Activated CD8-positive, alpha-beta T cell treated with anti-CD3 and anti-CD28 coated beads, Interleukin-2, amount 10 ng/mL, durations not matched to agents 7 days and 5 days (primary cell): ENCODE measurements at regions of chr2 and their contacts with region 1.

Region 1: DNA sequence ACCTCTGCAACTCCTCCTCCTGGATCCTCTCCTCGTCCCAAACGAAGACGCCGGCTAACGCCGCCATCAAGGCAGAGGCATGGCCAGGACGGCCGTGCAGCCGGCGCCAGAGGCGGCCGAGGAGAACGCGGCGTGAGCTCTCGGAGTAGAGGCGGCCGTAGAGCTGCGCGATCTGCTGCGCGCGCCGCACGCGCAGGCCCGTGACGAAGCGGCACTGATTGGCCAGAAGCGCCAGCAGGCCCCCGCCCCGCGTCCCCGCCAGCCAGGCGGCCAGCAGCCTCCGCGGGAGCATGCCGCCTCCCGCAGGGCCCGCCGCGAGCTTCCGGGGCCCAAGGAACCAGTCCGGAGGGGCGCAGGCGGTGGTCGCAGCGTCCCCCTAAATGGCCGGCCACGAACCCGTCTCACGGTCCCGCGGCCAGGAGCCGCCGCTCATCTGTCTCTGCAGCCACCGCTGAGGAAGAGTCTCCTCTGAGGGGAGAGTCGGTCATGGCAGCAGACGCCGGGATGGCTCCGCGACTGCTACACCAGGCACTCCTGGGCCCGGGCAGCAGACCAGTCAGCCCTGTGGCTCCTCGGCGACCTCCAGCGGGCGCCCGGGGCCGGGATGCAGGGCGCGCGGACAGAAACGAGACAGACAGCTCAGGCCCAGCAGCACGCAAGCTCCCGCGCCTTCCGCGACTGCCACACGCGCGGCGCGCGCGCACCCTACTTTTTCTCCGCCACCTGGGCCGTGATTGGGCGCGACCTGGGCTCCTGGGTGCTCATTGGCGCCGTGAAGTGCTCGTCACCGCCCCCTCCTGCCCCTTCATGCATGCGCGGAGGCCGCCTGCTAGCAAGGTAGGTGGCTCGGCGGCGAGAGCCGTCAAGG is at the start of gene STARD7:
- DNase-seq: peak; percentile 98
- ATAC-seq: peak; percentile 92
- H3K4me3 Mint-ChIP-seq: peak within 1 kb of the TSS; percentile 87
- H3K27ac Mint-ChIP-seq: peak within 1 kb of the TSS; percentile 86
- H3K4me1 Mint-ChIP-seq: peaks cover 55% of the 10 kb centered on the region
- H3K27me3 Mint-ChIP-seq: no peaks in the 10 kb centered on the region
- total RNA-seq, gene STARD7: 139 to 143 TPM

Region 2: DNA sequence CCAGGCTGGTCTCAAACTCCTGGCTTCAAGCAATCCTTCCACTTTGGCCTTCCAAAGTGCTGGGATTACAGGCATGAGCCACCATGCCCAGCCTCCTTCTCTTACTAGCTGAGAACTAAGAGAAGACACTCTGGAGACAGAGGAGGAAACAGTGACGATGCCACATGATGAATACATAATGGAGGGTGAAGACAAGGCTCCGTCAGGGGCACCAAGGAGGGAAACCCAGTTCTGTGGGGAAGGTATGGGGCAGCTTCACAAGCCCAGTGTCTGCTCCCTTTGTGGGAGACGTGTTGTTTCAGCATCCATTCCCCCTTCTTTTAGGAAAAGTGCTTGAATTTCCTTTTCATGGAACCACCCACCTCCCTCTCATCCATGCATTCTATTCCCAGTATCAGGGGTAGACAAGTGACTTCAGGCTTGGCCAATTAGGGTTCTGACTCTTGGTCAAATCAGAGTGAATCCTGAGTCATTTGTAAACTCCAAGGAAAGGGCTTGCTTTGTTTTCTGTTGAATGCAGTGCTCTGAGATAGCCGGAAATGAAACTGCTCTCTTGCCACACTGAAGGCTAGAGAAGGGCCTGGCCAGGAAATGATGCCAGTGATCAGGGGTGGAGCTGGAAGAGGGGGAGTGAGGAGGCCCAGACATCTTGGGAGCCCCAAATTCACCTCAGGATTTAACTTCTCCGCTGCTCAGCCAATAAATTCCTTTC is 33.7 kb after region 1 on chr2:
- CTCF ChIA-PET with region 1: interaction called, 5 read pairs
- POLR2A ChIA-PET with region 1: interaction called, 12 read pairs
- DNase-seq: peak; percentile 80
- ATAC-seq: peak; percentile 92
- H3K4me3 Mint-ChIP-seq: peak overlapping the region; percentile 58
- H3K27ac Mint-ChIP-seq: peak overlapping the region; percentile 96
- H3K4me1 Mint-ChIP-seq: peaks cover 57% of the 10 kb centered on the region
- H3K27me3 Mint-ChIP-seq: no peaks in the 10 kb centered on the region

Region 3: GRCh38 chr2:96254571-96254970 is 46.2 kb after region 1 on chr2:
- CTCF ChIA-PET with region 1: no interaction called
- POLR2A ChIA-PET with region 1: interaction called, 10 read pairs
- DNase-seq: no peak
- ATAC-seq: no peak
- H3K4me3 Mint-ChIP-seq: no peak overlapping the region
- H3K27ac Mint-ChIP-seq: no peak overlapping the region
- H3K4me1 Mint-ChIP-seq: peaks cover 65% of the 10 kb centered on the region
- H3K27me3 Mint-ChIP-seq: no peaks in the 10 kb centered on the region

Region 4: GRCh38 chr2:96260404-96261260 is 52.3 kb after region 1 on chr2:
- CTCF ChIA-PET with region 1: interaction called, 34 read pairs
- POLR2A ChIA-PET with region 1: interaction called, 10 read pairs
- DNase-seq: peak; percentile 57
- ATAC-seq: peak; percentile 43
- H3K4me3 Mint-ChIP-seq: no peak overlapping the region
- H3K27ac Mint-ChIP-seq: peak overlapping the region; percentile 53
- H3K4me1 Mint-ChIP-seq: peaks cover 72% of the 10 kb centered on the region
- H3K27me3 Mint-ChIP-seq: no peaks in the 10 kb centered on the region

Region 5: GRCh38 chr2:96265840-96266679 is 57.7 kb after region 1 on chr2 and contains the starts of genes CIAO1 and TMEM127:
- CTCF ChIA-PET with region 1: interaction called, 34 read pairs
- POLR2A ChIA-PET with region 1: interaction called, 17 read pairs
- DNase-seq: peak; percentile 99
- ATAC-seq: peak; percentile 94
- H3K4me3 Mint-ChIP-seq: peak within 1 kb of the TSS; percentile 97
- H3K27ac Mint-ChIP-seq: peak within 1 kb of the TSS; percentile 91
- H3K4me1 Mint-ChIP-seq: peaks cover 52% of the 10 kb centered on the region
- H3K27me3 Mint-ChIP-seq: no peaks in the 10 kb centered on the region
- total RNA-seq, gene CIAO1: 64.9 to 65.9 TPM
- total RNA-seq, gene TMEM127: 31.8 to 34.2 TPM